Activated T-helper 1 cell treated with anti-CD3 and anti-CD28 coated beads, Interleukin-12 subunit alpha, Interleukin-12 subunit beta, Interleukin-2, Interleukin-4 antibody, amounts not matched to agents 30 ng/mL and 10 ng/mL and 1 ng/mL, durations not matched to agents 14 hours and 24 hours and 36 hours (primary cell): ENCODE measurements at regions of chr10 and their contacts with region 1.

Region 1: GRCh38 chr10:60733189-60733822 is 45.0 kb upstream of the CDK1 start:
- DNase-seq: peak; percentile 36
- H3K4me3 Mint-ChIP-seq: no peak overlapping the region
- H3K27ac Mint-ChIP-seq: no peak overlapping the region
- H3K4me1 Mint-ChIP-seq: peaks cover 48% of the 10 kb centered on the region
- H3K27me3 Mint-ChIP-seq: peaks cover 4% of the 10 kb centered on the region

Region 2: DNA sequence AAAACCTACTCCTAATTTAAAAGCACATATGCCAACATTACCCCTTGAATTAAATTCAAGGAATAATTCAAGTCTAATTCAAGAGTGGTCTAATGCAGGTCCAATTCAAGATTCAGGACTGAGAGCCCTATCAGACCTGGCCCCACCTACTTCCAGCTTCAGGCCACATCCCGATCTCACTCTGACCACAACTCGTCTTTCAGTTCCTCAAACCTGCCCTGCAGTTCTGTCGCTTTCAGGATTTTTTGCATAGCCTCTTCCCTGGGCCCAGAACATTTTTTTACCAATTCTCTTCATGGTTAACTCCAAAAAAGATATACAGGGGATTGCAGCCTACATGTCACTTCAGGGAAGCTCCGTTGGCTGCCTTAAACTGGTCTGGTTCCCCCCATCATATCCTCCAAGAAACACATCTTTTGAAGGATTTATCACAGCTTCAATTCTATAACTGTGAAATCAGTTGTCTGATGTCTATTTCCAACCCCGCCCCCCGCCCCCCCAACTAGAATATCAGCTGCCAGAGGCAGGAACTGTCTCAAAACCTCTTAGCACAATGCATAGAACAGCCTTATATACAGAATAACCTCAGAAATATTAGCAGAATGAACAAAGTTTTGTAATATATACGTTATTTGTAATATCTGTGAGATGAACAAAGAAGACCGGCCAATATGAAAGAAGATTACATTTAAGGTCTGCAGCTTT is 847.7 kb before region 1 on chr10:
- intact Hi-C with region 1: loop called (anchors 5 kb)
- DNase-seq: no peak
- H3K4me3 Mint-ChIP-seq: peak overlapping the region; percentile 63
- H3K27ac Mint-ChIP-seq: peak overlapping the region; percentile 94
- H3K4me1 Mint-ChIP-seq: peaks cover 88% of the 10 kb centered on the region
- H3K27me3 Mint-ChIP-seq: no peaks in the 10 kb centered on the region

Region 3: DNA sequence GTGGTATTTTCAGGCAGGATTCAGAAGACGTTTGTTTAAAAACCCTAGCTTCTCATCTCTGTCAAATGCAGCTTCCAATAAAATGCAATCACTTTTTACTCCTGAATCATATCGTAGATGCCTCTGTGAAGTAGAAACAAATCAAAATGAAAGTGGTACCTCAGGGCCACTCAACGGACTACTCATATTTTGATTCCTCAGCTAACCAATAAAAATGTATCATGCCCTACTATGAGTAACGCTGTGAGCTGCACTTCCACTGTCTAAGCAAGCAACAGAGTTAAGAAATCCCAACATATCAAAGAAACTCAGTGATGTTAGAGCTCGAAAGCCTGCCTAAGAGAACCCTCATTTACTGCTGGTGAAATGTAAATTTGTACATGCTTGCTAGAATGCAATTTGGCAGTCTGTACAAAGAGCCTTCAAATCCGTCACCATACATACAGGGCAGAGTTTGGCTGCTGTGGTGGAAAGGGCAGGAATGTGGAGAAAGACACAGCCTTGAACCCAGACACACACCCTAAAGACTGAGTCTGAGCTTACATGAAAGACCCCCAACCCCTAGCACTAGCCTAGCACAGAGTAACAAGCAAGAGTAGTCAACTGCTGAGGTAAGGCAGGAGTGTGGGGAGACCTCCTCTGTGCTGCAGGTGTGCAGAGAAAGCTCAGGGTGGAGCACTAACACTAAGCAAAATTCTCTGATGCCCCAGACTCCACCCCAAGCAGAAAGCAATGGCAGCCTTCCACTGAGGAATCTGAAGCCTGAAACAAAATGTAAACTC is 495.1 kb before region 1 on chr10:
- intact Hi-C with region 1: loop called (anchors 5 kb)
- DNase-seq: no peak
- H3K4me3 Mint-ChIP-seq: peak overlapping the region; percentile 27
- H3K27ac Mint-ChIP-seq: peak overlapping the region; percentile 33
- H3K4me1 Mint-ChIP-seq: peaks cover 30% of the 10 kb centered on the region
- H3K27me3 Mint-ChIP-seq: no peaks in the 10 kb centered on the region

Region 4: DNA sequence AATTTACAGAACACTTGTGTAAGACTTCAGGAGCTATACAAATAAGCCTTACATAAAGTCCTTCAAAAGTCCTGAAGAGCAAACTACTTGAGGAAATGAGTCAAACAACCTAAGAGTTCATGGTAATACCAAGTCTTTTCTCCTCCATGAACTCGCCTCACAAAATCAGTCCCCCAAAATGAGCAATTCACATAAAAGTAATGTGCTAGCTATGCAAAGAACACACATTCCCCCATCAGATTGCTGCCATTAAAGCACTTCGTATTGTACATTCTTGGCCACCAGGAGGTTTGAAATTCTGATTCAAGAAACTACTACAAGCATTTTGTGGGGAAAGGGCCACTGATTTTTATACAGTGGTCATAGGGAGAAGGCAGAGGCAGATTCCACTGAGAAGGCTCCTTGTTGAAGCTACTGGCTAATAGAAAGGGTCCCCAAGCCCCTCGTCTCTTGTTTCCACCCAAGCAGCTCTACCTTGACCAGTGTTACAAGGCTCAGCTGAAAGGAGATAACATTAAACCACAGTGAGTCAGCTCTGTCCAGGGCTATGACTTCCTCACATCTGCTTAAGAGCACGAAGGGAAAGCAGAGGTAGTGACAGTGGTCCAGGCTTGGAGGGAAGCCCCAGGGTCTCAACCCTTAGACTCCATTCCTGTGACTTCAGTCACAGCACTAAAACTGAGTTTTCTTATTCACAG is 70.2 kb before region 1 on chr10:
- intact Hi-C with region 1: loop called (anchors 1 kb)
- DNase-seq: no peak
- H3K4me3 Mint-ChIP-seq: no peak overlapping the region
- H3K27ac Mint-ChIP-seq: no peak overlapping the region
- H3K4me1 Mint-ChIP-seq: peaks cover 32% of the 10 kb centered on the region
- H3K27me3 Mint-ChIP-seq: no peaks in the 10 kb centered on the region

Region 5: DNA sequence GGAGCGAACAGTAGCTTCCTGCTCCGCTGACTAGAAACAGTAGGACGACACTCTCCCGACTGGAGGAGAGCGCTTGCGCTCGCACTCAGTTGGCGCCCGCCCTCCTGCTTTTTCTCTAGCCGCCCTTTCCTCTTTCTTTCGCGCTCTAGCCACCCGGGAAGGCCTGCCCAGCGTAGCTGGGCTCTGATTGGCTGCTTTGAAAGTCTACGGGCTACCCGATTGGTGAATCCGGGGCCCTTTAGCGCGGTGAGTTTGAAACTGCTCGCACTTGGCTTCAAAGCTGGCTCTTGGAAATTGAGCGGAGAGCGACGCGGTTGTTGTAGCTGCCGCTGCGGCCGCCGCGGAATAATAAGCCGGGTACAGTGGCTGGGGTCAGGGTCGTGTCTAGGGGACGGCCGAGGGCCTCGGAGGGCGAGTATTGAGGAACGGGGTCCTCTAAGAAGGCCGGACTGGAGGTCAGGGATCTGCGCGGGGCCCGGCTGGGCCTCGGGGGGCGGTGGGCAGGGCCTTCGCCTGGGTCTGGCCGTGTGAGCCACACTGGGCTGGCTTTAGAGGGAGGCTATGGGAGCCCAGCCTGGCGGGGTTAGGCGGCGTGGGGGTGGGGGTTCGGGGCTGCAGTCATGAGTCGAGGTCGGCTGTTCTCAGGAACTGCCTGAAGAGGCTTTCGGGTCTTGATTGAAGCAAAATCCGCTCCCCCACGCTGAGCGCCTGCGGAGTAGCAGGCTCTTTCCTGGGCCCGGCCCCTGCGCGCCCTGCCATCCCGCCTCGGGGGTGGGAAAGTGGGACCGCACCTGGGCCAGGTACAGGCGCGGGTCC is 45.1 kb after region 1 on chr10 and contains the start of gene CDK1:
- intact Hi-C with region 1: loop called (anchors 1 kb)
- DNase-seq: peak; percentile 97
- H3K4me3 Mint-ChIP-seq: peak within 1 kb of the TSS; percentile 99
- H3K27ac Mint-ChIP-seq: peak within 1 kb of the TSS; percentile 97
- H3K4me1 Mint-ChIP-seq: peaks cover 35% of the 10 kb centered on the region
- H3K27me3 Mint-ChIP-seq: peaks cover 2% of the 10 kb centered on the region
- total RNA-seq, gene CDK1: 100 and 104 TPM in 2 replicates

Region 6: GRCh38 chr10:61188691-61189090 is 455.4 kb after region 1 on chr10:
- intact Hi-C with region 1: no loop called
- DNase-seq: no peak
- H3K4me3 Mint-ChIP-seq: no peak overlapping the region
- H3K27ac Mint-ChIP-seq: no peak overlapping the region
- H3K4me1 Mint-ChIP-seq: no peaks in the 10 kb centered on the region
- H3K27me3 Mint-ChIP-seq: peaks cover 2% of the 10 kb centered on the region